Cardiac septum (tissue), 1 donor: ENCODE measurements at regions of chr3 and their contacts with region 1.

Region 1: DNA sequence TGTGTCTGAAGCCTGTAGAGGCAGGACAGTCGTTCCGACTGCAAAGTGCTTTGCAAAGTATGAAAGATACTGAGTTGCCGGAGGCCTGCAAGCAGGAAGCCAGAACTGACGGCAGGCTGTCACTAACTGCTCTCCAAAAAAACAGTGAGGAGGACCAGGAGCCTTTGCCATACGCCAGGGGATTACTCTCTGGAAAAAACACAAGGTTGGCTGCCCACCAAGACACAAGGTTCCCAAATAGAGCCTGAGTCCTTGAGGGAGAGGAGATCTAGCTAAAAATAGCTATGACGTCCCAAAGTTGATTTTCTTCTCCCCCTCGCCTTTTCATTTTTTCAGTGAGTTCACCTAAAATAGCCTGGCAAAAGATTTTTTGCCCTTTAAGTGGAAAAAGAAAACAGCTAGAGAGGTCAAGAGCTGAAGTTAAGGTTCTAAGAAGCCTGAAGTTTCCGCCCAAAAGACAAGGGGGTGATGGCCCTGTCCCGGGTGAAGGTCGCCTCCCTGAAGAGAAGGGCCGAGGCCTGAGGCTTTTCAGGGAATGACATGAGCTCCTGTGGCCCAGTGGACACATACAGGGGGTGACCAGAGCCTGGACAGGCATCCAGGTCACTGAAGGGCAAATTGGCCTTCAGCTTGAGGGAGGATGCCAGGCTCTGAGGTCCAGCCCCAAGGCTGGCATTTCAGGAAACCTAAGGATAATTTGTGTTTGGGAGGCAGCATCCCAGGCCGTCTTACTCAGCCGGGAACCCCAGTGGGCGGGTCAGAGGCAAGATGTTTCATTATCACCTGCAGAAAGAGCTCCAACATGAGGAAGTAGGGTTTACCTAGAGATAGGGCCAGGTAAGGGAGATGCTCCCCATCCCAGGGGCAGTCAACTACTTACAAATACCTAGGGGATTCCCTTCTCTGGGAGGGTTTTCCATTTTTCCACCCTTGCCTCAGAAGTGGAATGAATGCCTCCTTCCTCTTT is 44.9 kb upstream of the DGKG start:
- DNase-seq: no peak

Region 2: GRCh38 chr3:186268616-186269448 is 138.1 kb before region 1 on chr3:
- intact Hi-C with region 1: no loop called
- DNase-seq: peak; percentile 50

Region 3: GRCh38 chr3:186381424-186382216 is 25.3 kb before region 1 on chr3:
- intact Hi-C with region 1: loop called (anchors 2 kb)
- DNase-seq: no peak

Region 4: GRCh38 chr3:186425788-186426730 is 19.1 kb after region 1 on chr3:
- intact Hi-C with region 1: loop called (anchors 2 kb)
- DNase-seq: no peak

Region 5: GRCh38 chr3:186442162-186442561 is 35.2 kb after region 1 on chr3:
- intact Hi-C with region 1: loop called (anchors 5 kb)
- DNase-seq: no peak

Region 6: GRCh38 chr3:186589121-186589520 is 182.2 kb after region 1 on chr3:
- intact Hi-C with region 1: no loop called
- DNase-seq: no peak